ENCODE measurements at regions of chr17 and their contacts with region 1.

Region 1: GRCh38 chr17:74368092-74369081 is 1.1 kb downstream of the GPR142 start:
- DNase-seq: peak; percentile 81 to 92
- ATAC-seq: peak; percentile 81
- H3K4me3 ChIP-seq: no peak overlapping the region
- H3K27ac ChIP-seq: no peak overlapping the region
- H3K4me1 ChIP-seq: no peaks in the 10 kb centered on the region
- H3K27me3 ChIP-seq: no peaks in the 10 kb centered on the region

Region 2: DNA sequence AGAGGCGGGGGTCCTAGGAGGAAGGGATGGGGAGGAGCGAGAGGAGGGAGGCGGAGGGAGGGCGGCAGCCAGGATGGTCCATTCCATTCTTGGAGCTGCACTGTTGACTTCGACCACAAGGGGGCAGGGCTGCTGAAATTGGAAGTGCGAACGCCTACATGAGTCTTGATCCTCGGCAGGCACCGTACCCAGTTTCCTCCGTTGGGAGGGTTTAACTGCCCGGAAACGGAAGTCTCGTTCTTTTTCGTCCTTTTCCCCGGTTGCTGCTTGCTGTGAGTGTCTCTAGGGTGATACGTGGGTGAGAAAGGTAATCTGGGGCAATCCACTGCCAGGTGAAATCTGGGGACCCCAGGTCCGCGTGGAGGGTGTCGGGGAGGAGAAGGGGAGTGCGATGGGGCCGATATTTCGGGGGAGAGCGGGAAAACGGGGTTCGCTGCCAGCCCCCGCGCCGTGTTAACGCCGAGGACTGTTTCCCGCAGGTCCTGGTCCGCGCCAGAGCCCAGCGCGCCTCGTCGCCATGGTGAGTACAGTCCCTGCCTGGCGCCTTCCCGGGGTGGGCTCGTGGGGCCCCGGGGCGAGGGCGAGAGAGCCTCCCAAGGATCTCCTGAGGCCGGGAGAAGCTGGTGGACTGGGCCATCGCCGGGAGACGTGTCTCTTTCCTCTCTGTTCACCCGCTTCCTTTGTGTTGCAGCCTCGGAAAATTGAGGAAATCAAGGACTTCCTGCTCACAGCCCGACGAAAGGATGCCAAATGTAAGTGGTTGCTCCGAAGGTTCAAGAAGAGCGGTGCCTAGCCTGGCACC is 164.7 kb before region 1 on chr17 and contains the start of gene RPL38:
- intact Hi-C with region 1: loop called in 1 of 2 experiments (anchors 10 kb)
- DNase-seq: peak; percentile 97 to 98
- ATAC-seq: peak; percentile 97
- H3K4me3 ChIP-seq: peak within 1 kb of the TSS; percentile 90 to 97
- H3K27ac ChIP-seq: peak within 1 kb of the TSS in 1 of 2 donors; percentile 81
- H3K4me1 ChIP-seq: no peaks in the 10 kb centered on the region
- H3K27me3 ChIP-seq: no peaks in the 10 kb centered on the region
- total RNA-seq, gene RPL38: 597 to 622 TPM

Region 3: DNA sequence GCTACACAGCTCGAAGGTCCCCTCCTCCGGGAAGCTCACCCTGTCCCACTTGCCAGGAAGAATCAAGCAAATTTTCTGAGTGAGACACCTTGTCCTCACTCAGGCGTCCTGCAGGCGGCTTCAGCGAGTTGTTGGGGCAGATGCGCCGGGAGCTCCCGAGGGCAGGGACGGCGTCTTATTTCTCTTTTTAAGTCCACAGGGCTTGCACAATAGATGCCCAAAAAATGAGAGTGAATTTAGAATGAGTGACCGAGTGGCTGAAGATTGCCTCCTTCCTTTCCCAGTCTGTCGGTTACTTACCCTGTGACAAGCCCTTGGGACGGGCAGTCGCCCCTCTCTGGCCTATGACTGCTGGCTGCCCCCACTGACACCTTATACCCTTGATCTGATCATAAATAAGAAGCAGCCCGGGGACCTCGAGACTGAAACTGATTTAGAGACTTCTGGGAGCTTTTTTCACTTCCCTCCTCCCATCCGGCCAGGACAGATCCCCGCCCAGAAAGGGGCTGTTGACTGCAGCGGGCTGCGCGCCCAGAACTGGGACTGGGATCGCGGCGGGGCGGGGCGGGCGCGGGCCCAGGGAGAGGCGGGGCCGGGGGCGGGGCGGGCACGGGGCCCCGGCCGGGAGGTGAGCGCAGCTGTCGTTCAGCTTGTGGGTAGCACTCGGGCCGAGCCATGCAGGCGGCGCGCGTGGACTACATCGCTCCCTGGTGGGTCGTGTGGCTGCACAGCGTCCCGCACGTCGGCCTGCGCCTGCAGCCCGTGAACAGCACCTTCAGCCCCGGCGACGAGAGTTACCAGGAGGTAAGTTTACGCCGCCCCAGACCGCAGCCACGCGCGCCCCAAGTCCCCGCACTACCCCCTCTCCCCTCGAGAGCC is 155.2 kb before region 1 on chr17 and contains the start of gene TTYH2:
- intact Hi-C with region 1: loop called (anchors 5 to 10 kb)
- DNase-seq: peak; percentile 94 to 95
- ATAC-seq: peak; percentile 91
- H3K4me3 ChIP-seq: peak within 1 kb of the TSS; percentile 28 to 55
- H3K27ac ChIP-seq: no peak within 1 kb of the TSS
- H3K4me1 ChIP-seq: no peaks in the 10 kb centered on the region
- H3K27me3 ChIP-seq: no peaks in the 10 kb centered on the region
- total RNA-seq, gene TTYH2: 4.4 to 13.0 TPM

Region 4: GRCh38 chr17:74493381-74493833 is 125.0 kb after region 1 on chr17:
- intact Hi-C with region 1: loop called (anchors 2 to 5 kb)
- DNase-seq: peak; percentile 77 to 85
- ATAC-seq: peak; percentile 78
- H3K4me3 ChIP-seq: no peak overlapping the region
- H3K27ac ChIP-seq: no peak overlapping the region
- H3K4me1 ChIP-seq: no peaks in the 10 kb centered on the region
- H3K27me3 ChIP-seq: no peaks in the 10 kb centered on the region

Measured in aorta (tissue), 5 donors.